Tibial artery (tissue), 4 donors: ENCODE measurements at regions of chr6 and their contacts with region 1.

Region 1: DNA sequence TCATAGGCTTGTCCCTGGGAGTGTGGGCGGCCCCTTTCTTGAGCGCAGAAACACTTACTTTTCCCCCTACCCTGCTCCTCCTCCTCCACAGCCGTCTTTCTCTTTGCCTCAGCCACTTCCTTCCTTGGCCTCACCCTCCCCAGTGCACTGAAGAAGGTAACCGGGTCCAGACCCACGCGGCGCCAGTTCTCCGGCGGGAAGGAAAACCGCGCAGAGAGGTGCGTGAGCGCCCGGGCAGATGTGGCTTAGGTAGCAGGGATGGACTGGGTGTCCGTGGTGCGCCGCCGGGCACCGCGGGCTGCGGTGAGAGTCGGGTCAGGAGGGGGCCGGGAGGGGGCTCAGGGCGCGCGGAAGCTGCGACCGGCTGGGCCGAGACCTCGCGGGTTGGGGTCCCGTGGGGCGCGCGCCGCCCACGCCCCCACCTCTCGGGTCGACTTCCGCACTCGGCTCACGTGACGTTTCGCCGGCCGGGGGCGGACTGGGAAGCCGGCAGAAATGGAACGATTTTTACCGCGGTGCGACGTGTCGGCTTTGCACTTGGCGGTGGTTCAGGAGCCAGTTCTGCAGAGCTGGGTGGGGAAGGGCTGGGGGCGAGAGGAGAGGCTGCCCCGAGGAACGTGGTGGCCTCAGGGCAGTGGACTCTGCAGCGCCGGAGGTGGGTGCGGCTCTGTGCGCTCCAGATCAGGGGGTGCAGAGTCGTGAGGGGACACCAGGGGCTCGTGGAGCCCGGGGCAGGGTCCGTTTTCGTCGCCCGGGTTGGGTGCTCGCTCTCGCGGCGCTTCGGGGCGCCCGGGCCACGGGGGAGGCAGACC is at the start of gene ABRACL:
- DNase-seq: peak; percentile 57 to 74
- H3K4me3 ChIP-seq: peak within 1 kb of the TSS; percentile 93 to 96
- H3K27ac ChIP-seq: peak within 1 kb of the TSS; percentile 74 to 82
- H3K4me1 ChIP-seq: peaks cover 0 to 15% (median 7%) of the 10 kb centered on the region in 4 donors
- H3K27me3 ChIP-seq: no peaks in the 10 kb centered on the region
- CTCF ChIP-seq: no peak

Region 2: DNA sequence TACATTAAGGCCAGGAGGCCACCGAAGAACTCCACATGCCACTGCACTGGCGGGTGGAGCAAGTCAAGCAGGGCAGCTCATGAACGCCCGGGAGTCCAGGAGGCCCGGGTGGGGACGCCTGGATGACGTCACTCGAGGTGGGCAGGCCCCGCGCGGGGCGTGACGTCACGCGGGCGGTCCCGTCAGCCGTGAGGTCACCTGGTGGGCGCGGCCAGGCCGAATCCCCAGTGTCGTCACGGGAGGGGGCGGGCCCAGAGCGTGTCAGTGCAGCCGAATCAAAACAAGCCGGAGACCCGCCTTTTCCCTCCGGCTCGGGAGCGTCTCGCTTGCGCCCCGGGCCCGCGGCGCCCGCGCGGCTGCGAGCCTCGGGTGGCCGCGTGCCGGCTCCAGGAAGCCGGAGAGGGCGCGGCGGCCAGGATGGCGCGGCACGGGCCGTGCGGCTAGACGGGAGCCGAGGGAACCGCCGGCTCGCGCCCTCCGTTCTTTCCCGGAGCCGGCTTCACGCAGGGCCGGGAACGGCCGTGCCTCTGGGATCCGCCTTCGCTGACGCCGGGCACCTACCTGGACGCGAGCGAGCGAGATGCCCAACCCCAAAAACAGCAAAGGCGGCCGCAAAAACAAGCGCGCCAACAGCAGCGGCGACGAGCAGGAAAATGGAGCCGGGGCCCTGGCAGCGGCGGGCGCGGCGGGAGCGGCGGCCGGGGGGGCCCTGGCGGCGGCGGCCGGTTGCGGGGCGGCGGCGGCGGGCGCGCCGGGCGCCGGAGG is 106.1 kb after region 1 on chr6 and contains the start of gene HECA:
- intact Hi-C with region 1: loop called (anchors 10 kb)
- DNase-seq: peak; percentile 97 to 98
- H3K4me3 ChIP-seq: peak within 1 kb of the TSS; percentile 75 to 88
- H3K27ac ChIP-seq: peak within 1 kb of the TSS; percentile 84 to 99
- H3K4me1 ChIP-seq: peaks cover 0 to 51% (median 15%) of the 10 kb centered on the region in 4 donors
- H3K27me3 ChIP-seq: no peaks in the 10 kb centered on the region
- CTCF ChIP-seq: no peak